ENCODE measurements at regions of chr7 and their contacts with region 1.

Region 1: GRCh38 chr7:105399043-105399725 is 10.5 kb upstream of the SRPK2 start:
- DNase-seq: peak in 2 of 4 experiments; percentile 35 to 47
- ATAC-seq: peak; percentile 16; the same call in 1 of the 3 replicates
- H3K4me3 ChIP-seq: no peak overlapping the region
- H3K27ac ChIP-seq: no peak overlapping the region
- H3K4me1 ChIP-seq: peaks cover 11 to 19% of the 10 kb centered on the region in 2 experiments; a peak in 4 of 5 replicates
- H3K27me3 ChIP-seq: no peaks in the 10 kb centered on the region
- CTCF ChIP-seq: peak; percentile 31 to 70 (median 34); a peak in 3 of 6 replicates
- EP300 ChIP-seq: no peak
- POLR2A ChIP-seq: no peak
- RAD21 ChIP-seq: peak; percentile 34 to 61

Region 2: GRCh38 chr7:105429746-105430612 is 30.8 kb after region 1 on chr7:
- CTCF ChIA-PET with region 1: interaction called, 12 read pairs
- POLR2A ChIA-PET with region 1: interaction called, 5 read pairs
- in situ Hi-C with region 1: no loop called
- intact Hi-C with region 1: loop called (anchors 1 kb)
- DNase-seq: peak in 3 of 4 experiments; percentile 41 to 82 (median 63)
- ATAC-seq: peak; percentile 90
- H3K4me3 ChIP-seq: no peak overlapping the region
- H3K27ac ChIP-seq: no peak overlapping the region
- H3K4me1 ChIP-seq: peaks cover 0 to 5% of the 10 kb centered on the region in 2 experiments; a peak in 1 of 5 replicates
- H3K27me3 ChIP-seq: no peaks in the 10 kb centered on the region
- CTCF ChIP-seq: peak; percentile 74 to 92 (median 80)
- EP300 ChIP-seq: peak; percentile 41
- POLR2A ChIP-seq: no peak
- RAD21 ChIP-seq: peak; percentile 87 to 95

Region 3: GRCh38 chr7:105487579-105488571 is 88.7 kb after region 1 on chr7:
- CTCF ChIA-PET with region 1: interaction called, 9 read pairs
- POLR2A ChIA-PET with region 1: no interaction called
- in situ Hi-C with region 1: no loop called
- intact Hi-C with region 1: loop called (anchors 1 kb)
- DNase-seq: peak; percentile 33 to 83 (median 62)
- ATAC-seq: peak; percentile 96
- H3K4me3 ChIP-seq: no peak overlapping the region
- H3K27ac ChIP-seq: peak overlapping the region; percentile 27; the same call in 2 of the 3 replicates
- H3K4me1 ChIP-seq: peaks cover 0 to 10% of the 10 kb centered on the region in 2 experiments; a peak in 2 of 5 replicates
- H3K27me3 ChIP-seq: no peaks in the 10 kb centered on the region
- CTCF ChIP-seq: peak; percentile 56 to 93 (median 77); a peak in 5 of 6 replicates
- EP300 ChIP-seq: peak; percentile 79
- POLR2A ChIP-seq: no peak
- RAD21 ChIP-seq: peak; percentile 89 to 93

Region 4: DNA sequence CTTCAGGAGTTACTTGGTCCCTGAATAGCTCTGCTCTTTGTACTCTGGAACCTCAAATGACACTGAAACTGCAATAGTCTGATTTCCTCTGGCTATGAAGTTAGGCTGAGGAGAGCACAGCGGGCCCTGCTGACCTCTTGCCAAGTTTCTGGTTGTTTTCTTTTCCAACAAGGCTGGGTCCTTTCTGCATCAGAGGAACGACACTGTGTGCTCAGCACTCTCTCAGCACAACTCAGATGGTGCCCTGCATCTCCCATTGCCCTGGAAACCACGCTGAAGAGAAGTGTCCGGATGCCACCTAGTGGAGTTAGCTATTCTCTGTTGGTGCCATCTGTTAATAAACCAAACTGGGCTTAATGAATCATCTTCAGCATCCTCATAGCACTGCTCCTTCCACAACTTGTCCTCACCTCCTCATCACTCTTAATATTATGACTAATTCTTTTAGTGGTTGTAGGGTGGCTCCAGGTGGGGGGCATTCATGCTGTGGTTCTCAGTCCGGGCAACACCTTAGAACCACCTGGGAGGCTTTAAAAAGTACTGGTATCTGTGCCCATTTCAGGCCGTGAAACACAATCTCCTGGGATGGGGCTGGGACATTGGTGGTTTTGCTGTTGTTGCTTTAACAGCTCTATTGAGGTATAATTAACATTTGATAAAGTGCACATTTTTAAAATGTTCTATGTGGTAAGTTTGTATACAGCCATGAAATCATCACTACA is 190.3 kb after region 1 on chr7:
- CTCF ChIA-PET with region 1: no interaction called
- POLR2A ChIA-PET with region 1: no interaction called
- in situ Hi-C with region 1: no loop called
- intact Hi-C with region 1: loop called (anchors 5 kb)
- DNase-seq: peak in 3 of 4 experiments; percentile 37 to 64 (median 47)
- ATAC-seq: peak; percentile 68
- H3K4me3 ChIP-seq: no peak overlapping the region
- H3K27ac ChIP-seq: no peak overlapping the region
- H3K4me1 ChIP-seq: peaks cover 0 to 13% of the 10 kb centered on the region in 2 experiments; a peak in 3 of 5 replicates
- H3K27me3 ChIP-seq: no peaks in the 10 kb centered on the region
- CTCF ChIP-seq: peak; percentile 66 to 75 (median 71)
- EP300 ChIP-seq: no peak
- POLR2A ChIP-seq: no peak
- RAD21 ChIP-seq: peak; percentile 25 to 72; a peak in 3 of 4 replicates

Measured in K562 (cell line).